ENCODE measurements at regions of chr2 and their contacts with region 1.

Region 1: DNA sequence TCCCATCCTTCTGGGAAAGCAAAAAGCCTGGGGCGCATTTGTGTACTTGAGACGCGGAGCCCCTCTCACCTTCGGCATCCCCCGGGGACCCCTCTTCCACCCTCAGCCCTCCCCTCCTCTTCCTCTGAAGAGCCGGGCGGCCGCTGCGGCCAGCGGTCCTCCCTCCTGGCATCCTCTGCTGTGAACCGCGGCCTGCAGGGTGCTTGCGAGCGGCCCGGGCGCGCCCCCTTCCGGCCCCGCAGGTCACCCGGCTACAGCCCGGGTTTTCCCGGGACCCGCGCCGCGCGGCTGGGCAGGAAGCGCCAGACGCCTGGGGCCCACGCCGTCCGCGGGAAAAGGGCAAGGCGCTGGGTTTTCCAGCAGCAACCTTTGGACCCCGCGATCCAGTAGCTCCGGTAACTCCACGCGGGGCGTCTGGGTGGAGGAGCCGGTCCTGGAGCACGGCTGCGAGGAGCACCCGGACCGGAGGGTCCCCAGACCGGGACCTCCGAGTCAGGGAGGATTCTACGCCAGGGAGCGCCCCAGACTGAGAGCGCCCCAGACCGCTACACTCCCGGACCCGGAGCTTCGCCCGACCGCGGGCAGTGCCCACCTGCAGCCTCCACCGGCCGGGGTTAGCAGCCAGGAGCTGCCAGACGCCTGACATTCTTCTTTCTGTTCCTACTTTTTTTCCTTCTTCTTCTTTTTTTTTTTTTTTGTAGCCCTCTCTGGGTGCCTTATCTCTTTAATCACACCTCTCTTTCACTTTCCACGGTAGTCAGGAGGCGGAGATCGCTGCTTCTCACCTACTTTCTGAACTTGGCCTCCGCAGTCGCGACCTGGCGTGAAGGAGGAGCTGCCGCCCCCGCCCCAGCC is at the start of gene IL18R1:
- DNase-seq: peak; percentile 90
- ATAC-seq: peak; percentile 99
- H3K4me3 ChIP-seq: peak within 1 kb of the TSS; percentile 67
- H3K27ac ChIP-seq: peak within 1 kb of the TSS; percentile 86
- H3K4me1 ChIP-seq: no peaks in the 10 kb centered on the region
- H3K27me3 ChIP-seq: no peaks in the 10 kb centered on the region
- CTCF ChIP-seq: peak; percentile 83
- total RNA-seq, gene IL18R1: 26.5 TPM

Region 2: DNA sequence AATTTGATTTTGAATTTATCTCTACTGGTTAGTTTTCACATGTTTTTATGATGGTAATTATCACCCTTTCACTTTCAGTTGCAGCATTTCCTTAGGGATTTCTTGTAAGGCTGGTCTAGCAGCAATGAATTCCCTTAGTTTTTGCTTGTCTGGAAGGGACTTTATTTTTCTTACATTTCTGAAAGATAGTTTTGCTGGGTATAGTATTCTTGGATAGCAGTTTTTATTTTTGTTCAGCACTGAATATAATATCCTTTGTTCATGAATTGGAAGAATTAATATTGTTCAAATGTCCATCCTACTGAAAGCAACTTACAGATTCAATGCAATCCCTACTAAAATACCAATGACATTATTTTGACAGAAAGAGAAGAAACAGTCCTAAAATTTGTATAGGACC is 138.7 kb before region 1 on chr2:
- intact Hi-C with region 1: no loop called
- DNase-seq: no peak
- ATAC-seq: no peak
- H3K4me3 ChIP-seq: no peak overlapping the region
- H3K27ac ChIP-seq: no peak overlapping the region
- H3K4me1 ChIP-seq: no peaks in the 10 kb centered on the region
- H3K27me3 ChIP-seq: no peaks in the 10 kb centered on the region
- CTCF ChIP-seq: no peak

Region 3: GRCh38 chr2:102240640-102241370 is 114.9 kb before region 1 on chr2:
- intact Hi-C with region 1: loop called (anchors 10 kb)
- DNase-seq: peak; percentile 95
- ATAC-seq: peak; percentile 98
- H3K4me3 ChIP-seq: no peak overlapping the region
- H3K27ac ChIP-seq: peak overlapping the region; percentile 43
- H3K4me1 ChIP-seq: peaks cover 5% of the 10 kb centered on the region
- H3K27me3 ChIP-seq: no peaks in the 10 kb centered on the region
- CTCF ChIP-seq: peak; percentile 98